Activated B cell treated with CpG ODN at 0.5 μM for 24 hours (primary cell): ENCODE measurements at regions of chr16 and their contacts with region 1.

Region 1: GRCh38 chr16:54286090-54286993 is at the start of gene IRX3:
- DNase-seq: no peak
- ATAC-seq: no peak
- H3K4me3 Mint-ChIP-seq: peak within 1 kb of the TSS; percentile 13
- H3K27ac Mint-ChIP-seq: peak within 1 kb of the TSS; percentile 1
- H3K4me1 Mint-ChIP-seq: peaks cover 17% of the 10 kb centered on the region
- H3K27me3 Mint-ChIP-seq: peaks cover 60% of the 10 kb centered on the region
- CTCF ChIP-seq: no peak
- total RNA-seq, gene IRX3: not detected in 2 replicates

Region 2: GRCh38 chr16:53881371-53881770 is 405.0 kb before region 1 on chr16:
- CTCF ChIA-PET with region 1: no interaction called
- POLR2A ChIA-PET with region 1: no interaction called
- intact Hi-C with region 1: loop called (anchors 5 kb)
- DNase-seq: no peak
- ATAC-seq: no peak
- H3K4me3 Mint-ChIP-seq: no peak overlapping the region
- H3K27ac Mint-ChIP-seq: no peak overlapping the region
- H3K4me1 Mint-ChIP-seq: no peaks in the 10 kb centered on the region
- H3K27me3 Mint-ChIP-seq: no peaks in the 10 kb centered on the region
- CTCF ChIP-seq: no peak

Region 3: DNA sequence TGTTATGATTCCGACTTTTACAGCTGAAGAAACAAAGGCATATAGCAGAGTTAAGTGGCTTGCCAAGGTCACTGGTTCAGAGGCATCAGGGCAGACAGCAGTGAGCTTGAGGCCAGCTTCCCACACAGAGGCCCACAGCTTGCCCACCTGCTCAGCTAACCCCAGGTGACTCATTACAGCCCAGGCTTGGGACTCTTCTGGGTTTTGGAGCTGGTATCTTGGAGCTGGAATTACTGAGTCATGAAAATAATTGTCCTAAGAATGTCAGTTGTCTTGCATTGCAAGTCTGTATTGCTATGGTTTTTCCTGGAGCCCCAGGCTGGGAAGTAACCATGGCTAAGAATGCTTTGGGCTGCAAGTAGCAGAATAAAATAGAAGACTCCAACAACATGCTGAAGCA is 32.6 kb after region 1 on chr16:
- CTCF ChIA-PET with region 1: no interaction called
- POLR2A ChIA-PET with region 1: no interaction called
- intact Hi-C with region 1: no loop called
- DNase-seq: no peak
- ATAC-seq: no peak
- H3K4me3 Mint-ChIP-seq: no peak overlapping the region
- H3K27ac Mint-ChIP-seq: no peak overlapping the region
- H3K4me1 Mint-ChIP-seq: no peaks in the 10 kb centered on the region
- H3K27me3 Mint-ChIP-seq: peaks cover 2% of the 10 kb centered on the region
- CTCF ChIP-seq: no peak

Region 4: GRCh38 chr16:56102183-56102686 is 1815.9 kb after region 1 on chr16:
- CTCF ChIA-PET with region 1: no interaction called
- POLR2A ChIA-PET with region 1: no interaction called
- intact Hi-C with region 1: no loop called
- DNase-seq: no peak
- ATAC-seq: no peak
- H3K4me3 Mint-ChIP-seq: no peak overlapping the region
- H3K27ac Mint-ChIP-seq: no peak overlapping the region
- H3K4me1 Mint-ChIP-seq: no peaks in the 10 kb centered on the region
- H3K27me3 Mint-ChIP-seq: peaks cover 14% of the 10 kb centered on the region
- CTCF ChIP-seq: no peak